ENCODE measurements at regions of chr19 and their contacts with region 1.

Region 1: DNA sequence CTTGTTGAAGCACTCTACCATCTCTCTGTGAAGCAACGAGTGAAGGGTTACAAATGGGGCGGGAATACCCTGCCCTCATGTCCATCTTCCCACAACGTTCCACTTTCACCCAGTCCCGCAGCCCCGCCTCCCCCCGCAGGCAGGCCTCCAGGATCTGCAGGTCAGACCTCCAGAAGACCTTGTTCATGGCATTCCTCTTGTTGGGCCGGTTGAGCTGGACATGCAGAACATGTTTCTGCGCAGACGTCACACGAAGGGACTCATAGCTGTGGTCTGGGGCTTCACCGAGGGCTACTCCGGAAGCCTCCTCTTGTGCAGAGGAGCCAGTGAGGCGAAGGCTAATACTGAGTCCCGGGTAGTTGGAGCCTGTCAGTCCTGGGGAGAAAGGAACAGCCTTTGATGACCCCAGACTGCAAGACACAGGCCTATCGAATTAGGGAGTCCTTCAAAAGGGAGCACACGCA is 420 bp downstream of the ECH1 start:
- DNase-seq: no peak
- H3K4me3 ChIP-seq: peak overlapping the region; percentile 67
- H3K27ac ChIP-seq: peak overlapping the region; percentile 82
- H3K4me1 ChIP-seq: peaks cover 12% of the 10 kb centered on the region
- H3K27me3 ChIP-seq: no peaks in the 10 kb centered on the region
- CTCF ChIP-seq: no peak

Region 2: GRCh38 chr19:38809592-38810252 is 21.5 kb before region 1 on chr19:
- CTCF ChIA-PET with region 1: no interaction called
- POLR2A ChIA-PET with region 1: interaction called, 11 read pairs
- intact Hi-C with region 1: no loop called
- DNase-seq: no peak
- H3K4me3 ChIP-seq: no peak overlapping the region
- H3K27ac ChIP-seq: no peak overlapping the region
- H3K4me1 ChIP-seq: no peaks in the 10 kb centered on the region
- H3K27me3 ChIP-seq: no peaks in the 10 kb centered on the region
- CTCF ChIP-seq: no peak